ENCODE measurements at regions of chr16 and their contacts with region 1.

Region 1: GRCh38 chr16:70746708-70747424 is 54.1 kb downstream of the VAC14 start:
- DNase-seq: peak; percentile 91 to 99
- H3K4me3 ChIP-seq: peak overlapping the region; percentile 38; the same call in 1 of the 2 replicates
- H3K27ac ChIP-seq: peak overlapping the region; percentile 98
- H3K4me1 ChIP-seq: peaks cover 53% of the 10 kb centered on the region
- H3K27me3 ChIP-seq: no peaks in the 10 kb centered on the region
- CTCF ChIP-seq: no peak

Region 2: DNA sequence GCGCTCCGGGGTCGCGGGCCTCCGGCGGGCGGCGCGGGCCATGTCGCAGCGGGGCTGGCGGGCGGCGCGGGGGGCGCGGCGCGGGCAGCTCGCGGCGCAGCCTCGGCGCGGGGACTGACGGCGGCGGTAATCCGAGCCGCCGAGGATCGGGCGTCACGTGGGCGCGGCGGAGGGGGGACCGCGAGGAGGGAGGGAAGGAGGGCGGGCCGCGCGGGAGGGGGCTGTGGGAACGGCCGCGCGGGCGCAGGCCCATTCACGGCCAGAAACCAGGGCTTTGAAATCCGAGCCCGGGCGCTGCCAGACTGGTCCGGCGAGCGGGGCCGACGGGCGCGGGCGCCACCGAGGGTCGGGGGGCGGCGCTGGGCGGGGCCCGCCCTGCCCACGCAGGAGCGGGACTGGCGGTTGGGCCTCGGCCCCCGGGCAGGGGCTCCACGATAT is 60.9 kb before region 1 on chr16 and contains the start of gene MTSS2:
- CTCF ChIA-PET with region 1: interaction called, 5 read pairs
- POLR2A ChIA-PET with region 1: interaction called, 14 read pairs
- intact Hi-C with region 1: loop called (anchors 2 kb)
- DNase-seq: peak; percentile 66 to 82
- H3K4me3 ChIP-seq: peak within 1 kb of the TSS; percentile 93
- H3K27ac ChIP-seq: no peak within 1 kb of the TSS
- H3K4me1 ChIP-seq: peaks cover 30% of the 10 kb centered on the region
- H3K27me3 ChIP-seq: no peaks in the 10 kb centered on the region
- CTCF ChIP-seq: no peak
- total RNA-seq, gene MTSS2: 27.6 and 52.0 TPM in 2 replicates

Region 3: DNA sequence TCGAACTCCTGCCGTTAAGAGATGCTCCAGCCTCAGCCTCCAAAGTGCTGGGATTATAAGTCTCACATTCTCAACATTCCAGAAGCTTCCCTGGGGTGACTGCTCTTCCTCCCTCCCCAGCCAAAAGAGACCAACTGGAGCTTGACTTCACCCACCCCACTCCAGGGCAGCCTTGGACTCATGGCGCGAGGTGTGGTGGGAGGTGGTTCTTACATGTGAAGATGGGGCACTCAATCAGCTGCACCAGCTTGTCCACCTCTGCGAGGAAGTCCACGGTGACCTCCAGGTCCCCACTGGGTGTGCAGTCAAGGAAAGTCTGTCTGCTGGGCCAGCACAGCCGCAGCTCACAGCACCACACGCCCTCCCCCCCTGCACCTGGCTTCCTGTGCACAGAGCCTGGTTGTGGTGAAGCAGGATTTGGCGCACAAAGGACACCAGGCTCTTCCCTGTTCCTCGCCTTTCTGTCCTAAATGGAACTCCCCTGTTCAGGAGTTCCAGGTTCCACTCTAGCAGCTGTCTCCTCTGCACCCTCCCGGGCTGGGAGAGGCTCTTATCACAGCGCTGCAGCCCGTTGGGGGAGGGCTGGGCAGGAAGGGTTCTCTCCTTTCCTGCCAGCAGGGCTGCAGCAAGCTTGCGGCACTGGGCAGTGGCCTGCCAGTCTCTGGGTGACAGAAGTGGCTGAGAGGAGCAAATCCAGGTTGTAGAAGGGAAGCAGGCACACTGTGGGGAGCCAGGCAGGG is 51.4 kb before region 1 on chr16:
- CTCF ChIA-PET with region 1: no interaction called
- POLR2A ChIA-PET with region 1: interaction called, 15 read pairs
- intact Hi-C with region 1: loop called (anchors 1 kb)
- DNase-seq: peak; percentile 62 to 70
- H3K4me3 ChIP-seq: no peak overlapping the region
- H3K27ac ChIP-seq: peak overlapping the region; percentile 79
- H3K4me1 ChIP-seq: peaks cover 63% of the 10 kb centered on the region
- H3K27me3 ChIP-seq: no peaks in the 10 kb centered on the region
- CTCF ChIP-seq: no peak

Region 4: DNA sequence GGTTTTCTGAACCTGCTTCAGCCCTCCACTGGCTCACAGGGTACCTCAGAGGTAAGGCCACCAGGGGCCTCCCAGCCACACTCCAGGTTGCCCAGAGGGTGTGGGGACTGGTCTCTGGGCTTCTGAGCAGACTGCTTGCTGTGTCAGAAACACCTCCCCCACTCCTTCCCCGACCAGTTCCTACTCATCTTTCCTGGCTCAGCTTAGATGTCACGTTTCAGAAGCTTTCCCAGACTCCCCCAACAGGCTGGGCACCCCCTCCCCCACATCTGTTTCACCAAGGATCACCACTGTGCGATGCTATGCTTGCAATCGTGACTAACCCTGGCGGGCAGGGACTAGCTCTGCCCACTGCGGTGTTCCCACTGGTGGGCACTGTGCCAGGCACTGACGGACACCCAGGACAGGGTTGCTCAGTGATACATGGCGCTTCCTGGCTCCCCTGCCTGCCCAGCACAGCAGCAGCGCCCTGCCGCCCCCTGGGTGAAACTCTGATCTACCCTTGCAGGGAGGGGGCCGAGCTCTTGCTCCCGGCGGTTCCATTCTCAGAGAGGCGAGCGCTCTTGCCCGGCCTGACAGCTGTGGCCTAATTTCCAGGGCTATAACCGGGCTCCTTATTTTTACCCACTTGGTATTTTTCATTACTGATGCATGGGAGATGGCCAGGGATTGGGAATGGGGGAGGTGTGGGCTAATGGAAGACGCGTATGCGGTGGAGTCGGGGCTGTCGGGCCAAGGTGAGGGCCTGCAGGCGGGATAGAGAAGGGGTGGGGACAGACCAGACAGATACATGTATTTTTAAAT is 31.6 kb before region 1 on chr16:
- CTCF ChIA-PET with region 1: no interaction called
- POLR2A ChIA-PET with region 1: no interaction called
- intact Hi-C with region 1: loop called (anchors 2 kb)
- DNase-seq: peak; percentile 93 to 95
- H3K4me3 ChIP-seq: no peak overlapping the region
- H3K27ac ChIP-seq: peak overlapping the region; percentile 76
- H3K4me1 ChIP-seq: peaks cover 28% of the 10 kb centered on the region
- H3K27me3 ChIP-seq: no peaks in the 10 kb centered on the region
- CTCF ChIP-seq: peak; percentile 25

Region 5: DNA sequence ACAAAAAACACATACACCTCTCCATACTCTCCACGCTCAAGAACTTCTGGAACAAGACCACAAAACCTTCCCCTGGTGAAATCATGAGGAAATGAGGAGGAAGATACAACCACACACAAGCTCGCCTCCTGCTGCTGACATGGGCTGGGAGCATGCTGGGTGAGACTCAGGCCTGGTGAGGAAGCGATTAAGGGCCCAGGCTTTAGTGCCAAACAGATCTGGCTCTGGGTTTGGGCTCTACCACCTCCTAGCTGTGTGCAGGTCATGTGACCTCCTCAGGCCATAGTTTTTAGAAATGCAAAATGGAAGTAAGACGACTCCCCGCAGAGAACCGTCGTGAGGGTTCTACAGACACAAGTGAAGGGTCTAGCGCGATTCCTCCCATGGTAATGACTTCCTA is 12.8 kb after region 1 on chr16:
- CTCF ChIA-PET with region 1: interaction called, 3 read pairs
- POLR2A ChIA-PET with region 1: no interaction called
- intact Hi-C with region 1: loop called (anchors 1 kb)
- DNase-seq: no peak
- H3K4me3 ChIP-seq: no peak overlapping the region
- H3K27ac ChIP-seq: no peak overlapping the region
- H3K4me1 ChIP-seq: peaks cover 21% of the 10 kb centered on the region
- H3K27me3 ChIP-seq: no peaks in the 10 kb centered on the region
- CTCF ChIP-seq: no peak

Measured in PC-9 (cell line).